PC-9 (cell line): ENCODE measurements at regions of chr2 and their contacts with region 1.

Region 1: GRCh38 chr2:10709290-10709939 is 12.0 kb upstream of the ATP6V1C2 start:
- DNase-seq: peak in 1 of 2 experiments; percentile 51
- H3K4me3 ChIP-seq: no peak overlapping the region
- H3K27ac ChIP-seq: no peak overlapping the region
- H3K4me1 ChIP-seq: no peaks in the 10 kb centered on the region
- H3K27me3 ChIP-seq: no peaks in the 10 kb centered on the region
- CTCF ChIP-seq: peak; percentile 73

Region 2: DNA sequence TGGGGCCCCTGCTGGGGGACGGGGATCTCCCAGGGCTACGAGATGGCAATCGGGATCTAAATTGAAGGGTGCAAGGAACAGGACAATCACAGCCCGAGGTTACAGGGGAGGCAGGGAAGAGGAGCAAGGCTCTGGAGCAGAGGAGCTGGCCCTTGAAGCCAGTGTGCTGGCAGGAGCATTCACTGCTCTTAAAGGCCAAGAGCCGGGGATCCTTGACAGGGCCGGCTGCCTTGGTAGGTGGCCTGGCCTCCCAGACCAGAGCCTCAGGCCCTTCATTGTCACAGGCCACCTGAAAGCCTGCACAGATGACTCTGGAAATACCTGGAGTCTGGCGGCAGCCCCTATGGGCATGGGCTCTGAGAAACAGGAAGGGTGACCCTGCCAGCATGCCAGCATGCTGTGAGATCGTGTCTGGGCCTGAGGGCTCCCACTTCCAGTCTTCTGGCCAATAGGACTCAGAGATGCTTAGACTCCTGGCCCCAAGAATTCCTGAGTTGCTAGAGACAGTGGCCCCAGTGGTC is 64.5 kb after region 1 on chr2:
- CTCF ChIA-PET with region 1: no interaction called
- POLR2A ChIA-PET with region 1: no interaction called
- intact Hi-C with region 1: loop called (anchors 2 kb)
- DNase-seq: peak; percentile 43
- H3K4me3 ChIP-seq: no peak overlapping the region
- H3K27ac ChIP-seq: 0 out of 2 replicates have a peak overlapping the region, but pooled peaks have one; percentile 19
- H3K4me1 ChIP-seq: no peaks in the 10 kb centered on the region
- H3K27me3 ChIP-seq: no peaks in the 10 kb centered on the region
- CTCF ChIP-seq: no peak

Region 3: DNA sequence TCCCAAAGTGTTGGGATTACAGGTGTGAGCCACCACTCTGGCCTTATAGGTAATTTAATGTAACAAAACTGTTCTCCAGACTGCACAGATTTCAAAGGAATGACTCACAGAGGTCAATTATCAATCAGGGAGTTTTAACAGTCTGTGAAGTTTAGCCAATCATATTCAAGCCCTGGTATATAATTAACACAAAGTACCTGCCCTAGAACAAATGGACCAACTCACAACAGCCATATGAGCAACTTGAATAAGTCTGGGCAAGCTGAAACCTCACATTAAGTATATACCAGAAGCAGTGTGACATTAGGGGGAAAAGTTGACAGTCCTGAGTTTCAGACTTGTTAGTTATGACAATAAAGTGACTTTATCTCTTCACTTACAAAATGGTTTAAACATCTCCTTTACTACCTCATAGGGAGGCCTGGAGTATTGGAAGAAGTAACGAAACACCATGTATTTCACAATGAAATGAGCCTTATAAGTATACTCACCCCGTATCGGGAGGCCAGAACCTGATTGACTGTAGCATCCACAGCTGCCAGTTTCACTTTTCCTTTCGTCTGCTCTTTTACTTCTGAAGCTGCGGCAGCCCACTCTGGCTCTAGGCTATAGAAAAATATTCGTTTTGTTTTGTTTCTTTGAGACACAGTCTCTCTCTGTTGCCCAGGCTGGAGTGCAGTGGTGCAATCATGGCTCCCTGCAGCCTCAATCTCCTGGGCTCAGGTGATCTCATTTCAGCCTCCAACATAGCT is 81.0 kb after region 1 on chr2:
- CTCF ChIA-PET with region 1: no interaction called
- POLR2A ChIA-PET with region 1: no interaction called
- intact Hi-C with region 1: loop called (anchors 5 kb)
- DNase-seq: no peak
- H3K4me3 ChIP-seq: no peak overlapping the region
- H3K27ac ChIP-seq: no peak overlapping the region
- H3K4me1 ChIP-seq: no peaks in the 10 kb centered on the region
- H3K27me3 ChIP-seq: no peaks in the 10 kb centered on the region
- CTCF ChIP-seq: no peak

Region 4: DNA sequence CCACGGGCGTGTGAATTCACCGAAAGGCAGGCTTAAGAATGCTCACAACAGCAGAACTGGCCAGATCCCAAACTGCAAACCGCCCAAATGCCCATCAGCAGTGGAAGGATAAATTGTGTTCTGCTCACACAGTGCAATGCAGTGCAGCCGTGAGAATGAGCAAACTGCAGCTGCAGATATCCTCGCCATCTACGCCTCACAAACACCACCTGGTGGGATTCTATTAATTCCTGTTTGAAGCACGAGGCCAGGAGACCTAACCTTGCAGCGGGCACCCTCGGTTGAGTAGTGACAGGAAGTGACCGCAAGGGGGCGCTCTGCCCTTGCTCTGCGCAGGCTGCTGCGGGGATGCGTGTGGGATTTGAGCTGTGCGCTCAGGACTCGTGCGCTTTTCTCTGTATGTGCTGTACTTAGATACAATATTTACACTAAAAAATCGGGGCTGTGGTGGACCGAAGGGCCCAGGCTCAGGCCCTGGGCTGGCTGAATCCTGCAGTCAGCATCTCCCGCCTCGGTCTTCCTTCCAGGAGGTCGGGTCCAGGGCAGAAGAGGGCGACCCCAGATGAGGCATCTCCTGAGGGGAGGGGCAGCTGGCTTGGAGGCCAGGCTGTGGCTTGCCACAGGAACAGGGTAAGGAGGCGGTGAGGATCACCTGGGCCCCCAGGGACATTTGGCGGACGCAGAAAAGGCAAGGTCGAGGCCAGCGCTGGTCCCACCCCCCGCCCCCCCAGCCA is 123.0 kb after region 1 on chr2:
- CTCF ChIA-PET with region 1: no interaction called
- POLR2A ChIA-PET with region 1: no interaction called
- intact Hi-C with region 1: loop called (anchors 1 kb)
- DNase-seq: peak; percentile 69 to 82
- H3K4me3 ChIP-seq: no peak overlapping the region
- H3K27ac ChIP-seq: no peak overlapping the region
- H3K4me1 ChIP-seq: no peaks in the 10 kb centered on the region
- H3K27me3 ChIP-seq: peaks cover 32% of the 10 kb centered on the region
- CTCF ChIP-seq: peak; percentile 98

Region 5: DNA sequence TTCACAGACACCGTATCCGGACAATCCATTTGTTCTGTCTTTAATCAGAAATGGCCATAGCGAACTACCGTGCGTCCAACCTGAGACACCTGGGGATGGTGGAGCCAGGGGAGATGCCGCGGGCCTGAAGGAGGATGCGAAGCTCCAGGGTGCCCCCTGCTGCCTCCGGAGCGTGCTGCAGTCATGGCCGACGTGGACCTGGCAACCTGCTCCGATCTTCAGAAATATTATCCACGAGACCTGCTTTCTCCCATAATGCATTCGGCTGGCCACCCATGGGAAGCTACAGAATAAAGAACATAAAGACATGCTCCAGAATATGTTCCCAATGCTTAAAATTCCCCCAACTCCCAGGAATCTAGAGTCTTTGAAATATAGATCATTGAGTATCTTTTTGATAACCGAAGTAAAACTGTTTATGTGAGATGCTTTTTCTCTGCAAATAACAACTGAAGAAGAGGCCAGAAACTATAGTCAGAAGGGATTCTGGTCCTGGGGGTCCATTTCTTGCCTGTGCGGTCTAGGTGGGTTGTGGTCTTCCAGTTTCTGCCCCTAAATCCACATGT is 415.2 kb after region 1 on chr2:
- CTCF ChIA-PET with region 1: no interaction called
- POLR2A ChIA-PET with region 1: no interaction called
- intact Hi-C with region 1: loop called (anchors 1 kb)
- DNase-seq: peak; percentile 54 to 84
- H3K4me3 ChIP-seq: no peak overlapping the region
- H3K27ac ChIP-seq: no peak overlapping the region
- H3K4me1 ChIP-seq: peaks cover 23% of the 10 kb centered on the region
- H3K27me3 ChIP-seq: no peaks in the 10 kb centered on the region
- CTCF ChIP-seq: peak; percentile 95